A673 (cell line): ENCODE measurements at regions of chr6 and their contacts with region 1.

Region 1: DNA sequence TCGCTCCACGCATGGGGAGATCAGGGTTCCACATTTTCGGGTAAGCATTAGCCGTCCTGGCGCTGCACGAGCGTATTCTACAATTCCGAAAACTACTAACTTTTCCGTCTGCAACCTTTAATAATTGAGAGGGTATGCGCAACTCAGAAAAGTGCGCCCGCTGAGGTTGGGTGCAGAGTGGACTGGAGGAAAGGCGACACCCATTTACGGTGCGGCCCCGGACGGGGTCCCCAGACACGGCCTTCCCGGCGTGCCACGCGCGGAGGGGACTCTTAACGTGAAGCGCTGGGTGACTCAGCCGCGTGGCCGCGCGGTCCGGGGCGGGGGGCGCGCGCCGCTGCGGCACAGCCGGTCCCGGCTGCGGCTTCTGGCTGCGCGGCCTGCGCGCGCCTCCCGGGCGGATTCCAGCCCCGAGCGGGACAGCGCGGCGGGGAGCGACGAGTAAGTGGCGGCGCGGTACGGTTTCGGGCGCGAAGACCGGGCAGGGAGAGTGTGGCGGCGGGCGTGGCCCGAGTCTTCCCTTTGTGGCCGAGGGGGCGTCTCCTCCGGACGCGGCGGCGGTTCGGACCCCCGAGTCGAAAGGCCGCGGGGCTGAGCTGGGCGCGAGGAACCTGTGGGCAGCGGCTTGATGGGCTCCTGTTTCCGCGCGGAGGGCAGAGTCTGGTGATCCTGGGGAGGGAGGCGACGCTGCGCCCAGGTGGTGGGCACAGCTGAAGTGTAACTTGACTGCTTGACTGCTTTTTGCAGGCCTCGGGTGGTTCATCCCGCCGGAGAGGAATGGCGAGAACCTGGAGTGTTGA is at the starts of genes KCTD20 and PXT1:
- DNase-seq: peak; percentile 95
- H3K4me3 ChIP-seq: peak within 1 kb of the TSS; percentile 83
- H3K27ac ChIP-seq: peak within 1 kb of the TSS; percentile 95
- H3K4me1 ChIP-seq: peaks cover 36% of the 10 kb centered on the region
- H3K27me3 ChIP-seq: no peaks in the 10 kb centered on the region
- CTCF ChIP-seq: no peak
- total RNA-seq, gene KCTD20: 69.7 and 72.6 TPM in 2 replicates
- total RNA-seq, gene PXT1: 0.13 and 0.21 TPM in 2 replicates

Region 2: DNA sequence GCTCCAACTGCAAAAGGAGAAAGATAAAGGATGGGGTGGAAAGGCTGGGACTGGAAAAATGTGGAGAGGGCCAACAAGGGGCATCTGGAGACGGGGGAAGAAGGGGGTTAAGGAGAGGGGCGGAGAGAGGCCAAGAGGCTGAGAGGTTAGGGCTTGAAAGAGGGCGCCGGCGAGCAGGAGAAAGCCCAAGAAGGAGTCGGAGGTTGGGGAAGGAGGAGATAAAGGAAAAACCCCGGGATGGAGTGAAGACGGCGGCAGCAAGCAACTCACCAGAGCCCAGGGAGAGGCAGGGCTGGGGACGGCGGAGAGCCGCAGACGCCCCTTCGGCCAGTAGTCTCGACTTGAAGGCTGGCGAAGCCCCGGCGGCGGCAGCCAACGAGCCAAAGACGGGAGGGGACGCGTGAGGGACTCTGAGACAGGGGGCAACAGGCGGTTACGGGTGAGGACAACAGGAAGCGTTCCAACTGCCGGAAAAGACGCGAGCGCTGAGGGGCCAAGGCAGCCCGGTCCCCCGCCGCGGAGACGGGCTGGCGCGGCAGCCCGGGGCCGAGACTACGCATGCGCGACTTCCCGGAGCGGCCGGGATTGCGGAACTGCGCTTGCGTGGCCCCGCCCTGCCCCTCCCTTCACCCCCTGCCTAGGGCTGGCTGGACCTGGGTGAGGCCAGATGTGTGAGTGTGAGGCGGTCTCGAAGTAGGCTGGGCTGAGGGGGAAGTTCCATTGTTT is 104.2 kb after region 1 on chr6 and contains the start of gene STK38:
- CTCF ChIA-PET with region 1: no interaction called
- POLR2A ChIA-PET with region 1: no interaction called
- intact Hi-C with region 1: loop called (anchors 10 kb)
- DNase-seq: peak; percentile 91
- H3K4me3 ChIP-seq: peak within 1 kb of the TSS; percentile 92
- H3K27ac ChIP-seq: peak within 1 kb of the TSS; percentile 95
- H3K4me1 ChIP-seq: peaks cover 5% of the 10 kb centered on the region
- H3K27me3 ChIP-seq: no peaks in the 10 kb centered on the region
- CTCF ChIP-seq: 0 out of 2 replicates have a peak, but pooled peaks have one; percentile 11
- total RNA-seq, gene STK38: 21.2 and 24.2 TPM in 2 replicates

Region 3: DNA sequence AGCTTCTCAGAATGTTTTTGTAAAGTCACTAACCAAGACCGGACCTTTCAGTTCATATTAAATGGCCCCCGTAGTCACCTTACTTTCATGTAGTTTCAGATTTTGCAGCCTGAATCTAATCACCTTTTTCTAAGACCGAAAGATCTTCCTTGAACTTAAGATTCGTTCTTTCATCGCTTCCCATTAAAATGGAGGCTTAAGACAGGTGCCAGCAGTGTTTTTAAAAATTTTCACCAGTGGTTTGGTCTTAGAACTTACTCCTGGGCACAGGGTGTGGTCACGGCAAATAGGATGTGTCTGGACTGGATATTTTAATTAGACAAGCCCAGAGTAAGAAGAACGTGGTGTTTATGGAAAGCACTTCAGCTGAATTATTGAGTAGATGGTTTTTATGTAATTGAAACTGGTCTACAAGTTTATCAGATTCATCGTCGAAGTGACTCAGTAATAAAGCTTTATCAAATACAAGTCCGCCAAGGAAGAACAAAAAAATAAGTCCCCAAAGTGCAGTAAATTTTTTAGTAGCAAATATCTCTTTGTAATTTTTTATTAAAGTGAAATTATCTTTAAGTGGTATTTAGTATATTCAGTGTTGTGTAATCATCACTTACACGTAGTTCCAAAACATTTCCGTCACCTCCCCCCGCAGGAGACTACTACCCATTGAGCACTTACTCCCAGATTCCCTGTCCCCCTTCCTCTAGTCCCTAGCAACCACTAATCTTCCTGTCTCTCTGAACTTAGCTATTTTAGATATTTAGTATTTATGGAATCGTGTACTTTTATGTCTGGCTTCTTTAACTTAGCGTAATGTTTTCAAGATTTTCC is 152.2 kb after region 1 on chr6:
- CTCF ChIA-PET with region 1: no interaction called
- POLR2A ChIA-PET with region 1: no interaction called
- intact Hi-C with region 1: loop called (anchors 5 kb)
- DNase-seq: peak; percentile 64
- H3K4me3 ChIP-seq: peak overlapping the region; percentile 73
- H3K27ac ChIP-seq: peak overlapping the region; percentile 99
- H3K4me1 ChIP-seq: peaks cover 28% of the 10 kb centered on the region
- H3K27me3 ChIP-seq: no peaks in the 10 kb centered on the region
- CTCF ChIP-seq: no peak